HAP-1 (cell line): ENCODE measurements at regions of chr11 and their contacts with region 1.

Region 1: DNA sequence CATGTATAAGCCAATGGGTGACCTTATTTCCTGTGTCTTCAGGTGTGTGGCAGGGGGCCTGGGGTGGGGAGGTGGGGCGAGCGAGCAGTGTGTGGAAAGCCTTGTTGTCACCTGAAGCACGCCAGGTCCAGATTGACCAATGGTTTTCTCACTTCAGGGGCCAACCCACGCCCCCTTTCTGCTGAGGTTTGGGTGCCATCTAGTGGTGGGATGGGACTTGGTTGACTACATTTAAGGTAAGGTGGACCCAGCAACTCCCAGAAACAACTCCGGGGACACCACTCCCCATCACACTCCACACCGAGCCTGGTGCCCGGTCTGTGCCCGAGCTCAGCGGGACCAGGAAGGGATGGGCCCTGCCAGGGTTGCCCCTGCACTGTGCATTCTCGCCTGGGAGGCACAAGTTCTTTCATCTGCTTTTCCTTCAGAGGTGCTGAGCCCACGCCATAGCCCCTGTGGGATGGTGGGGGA is 40.0 kb downstream of the TPCN2 start:
- DNase-seq: peak; percentile 46 to 87
- H3K4me3 ChIP-seq: no peak overlapping the region
- H3K4me1 ChIP-seq: no peaks in the 10 kb centered on the region
- H3K27me3 ChIP-seq: no peaks in the 10 kb centered on the region

Region 2: GRCh38 chr11:68632802-68633201 is 455.9 kb before region 1 on chr11:
- in situ Hi-C with region 1: loop called (anchors 25 kb)
- DNase-seq: peak; percentile 74 to 77
- H3K4me3 ChIP-seq: no peak overlapping the region
- H3K4me1 ChIP-seq: no peaks in the 10 kb centered on the region
- H3K27me3 ChIP-seq: peaks cover 14% of the 10 kb centered on the region; the same call in 1 of the 2 replicates

Region 3: DNA sequence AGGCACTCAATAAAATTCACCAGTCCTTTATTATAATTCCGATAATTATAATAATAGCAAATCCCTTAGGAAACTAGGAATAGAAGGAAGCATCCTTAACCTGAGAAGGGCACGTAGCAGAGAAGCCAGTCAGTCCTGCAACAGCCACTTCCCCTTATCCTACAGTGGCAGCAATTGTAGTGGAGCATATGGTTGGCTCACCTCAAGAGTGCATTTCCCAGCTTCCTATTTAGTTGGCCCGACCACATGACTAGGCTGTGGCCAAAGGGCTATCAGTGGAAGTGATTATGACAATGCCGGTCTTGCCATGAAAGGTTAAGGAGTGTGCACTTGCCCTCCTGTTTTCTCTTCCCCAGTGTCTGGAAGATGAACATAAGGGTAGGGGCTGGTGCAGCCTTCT is 364.4 kb before region 1 on chr11:
- in situ Hi-C with region 1: no loop called
- DNase-seq: no peak
- H3K4me3 ChIP-seq: no peak overlapping the region
- H3K4me1 ChIP-seq: no peaks in the 10 kb centered on the region
- H3K27me3 ChIP-seq: peaks cover 23% of the 10 kb centered on the region

Region 4: GRCh38 chr11:69972351-69972802 is 883.7 kb after region 1 on chr11:
- in situ Hi-C with region 1: no loop called
- DNase-seq: no peak
- H3K4me3 ChIP-seq: no peak overlapping the region
- H3K4me1 ChIP-seq: no peaks in the 10 kb centered on the region
- H3K27me3 ChIP-seq: no peaks in the 10 kb centered on the region